ENCODE measurements at regions of chrX and their contacts with region 1.

Region 1: DNA sequence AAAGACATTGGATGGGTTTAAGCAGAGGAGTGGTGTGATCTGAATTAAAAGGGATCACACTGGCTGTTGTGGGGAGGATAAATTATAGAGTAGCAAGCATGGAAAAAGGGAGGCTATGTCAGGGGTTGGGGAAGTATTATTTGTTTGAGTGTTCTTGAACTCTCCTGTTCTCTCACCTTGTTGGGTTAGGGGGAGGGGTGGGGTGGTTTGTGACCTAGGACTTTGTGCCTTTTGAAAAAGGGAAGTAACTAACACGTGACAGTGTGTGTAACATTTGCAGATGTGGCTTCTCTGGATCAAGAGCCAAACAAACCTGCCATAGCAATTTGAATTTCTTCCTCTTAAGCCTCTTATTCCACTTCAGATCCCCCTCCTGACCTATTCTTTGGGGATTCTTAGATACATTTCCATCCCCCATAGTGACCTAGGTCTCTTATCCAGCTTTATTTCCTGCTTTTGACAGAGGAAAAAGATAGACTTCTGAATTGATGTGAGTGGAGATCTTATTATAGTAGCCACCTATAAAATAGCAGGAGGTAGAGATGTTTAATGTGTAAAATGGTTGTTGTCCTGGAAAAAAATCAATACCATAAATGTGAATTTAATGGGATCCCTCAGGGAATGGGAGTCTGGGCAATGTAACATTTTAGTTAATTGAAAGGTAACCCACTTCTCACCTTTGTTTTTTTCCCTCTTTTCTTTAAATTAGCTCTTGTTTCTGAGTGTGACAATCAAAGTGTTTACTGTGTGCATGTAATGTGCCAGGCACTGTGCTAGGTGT is 120.4 kb downstream of the CT47B1 start:
- DNase-seq: peak; percentile 84
- H3K4me3 ChIP-seq: peak overlapping the region; percentile 71
- H3K27ac ChIP-seq: peak overlapping the region; percentile 96
- H3K4me1 ChIP-seq: peaks cover 86% of the 10 kb centered on the region
- CTCF ChIP-seq: no peak

Region 2: GRCh38 chrX:120250522-120251271 is 504.6 kb before region 1 on chrX and contains the start of gene ZBTB33:
- CTCF ChIA-PET with region 1: no interaction called
- POLR2A ChIA-PET with region 1: no interaction called
- intact Hi-C with region 1: loop called (anchors 10 kb)
- DNase-seq: peak; percentile 90
- H3K4me3 ChIP-seq: peak within 1 kb of the TSS; percentile 92
- H3K27ac ChIP-seq: peak within 1 kb of the TSS; percentile 90
- H3K4me1 ChIP-seq: peaks cover 14% of the 10 kb centered on the region
- CTCF ChIP-seq: peak; percentile 70
- total RNA-seq, gene ZBTB33: 16.7 TPM in 2 replicates

Region 3: GRCh38 chrX:120560842-120561633 is 194.2 kb before region 1 on chrX and contains the start of gene CUL4B:
- CTCF ChIA-PET with region 1: no interaction called
- POLR2A ChIA-PET with region 1: interaction called, 5 read pairs
- intact Hi-C with region 1: loop called (anchors 2 kb)
- DNase-seq: peak; percentile 90
- H3K4me3 ChIP-seq: peak within 1 kb of the TSS; percentile 90
- H3K27ac ChIP-seq: peak within 1 kb of the TSS; percentile 85
- H3K4me1 ChIP-seq: peaks cover 22% of the 10 kb centered on the region
- CTCF ChIP-seq: no peak
- total RNA-seq, gene CUL4B: 13.5 and 15.5 TPM in 2 replicates

Region 4: GRCh38 chrX:120629667-120630537 is 125.4 kb before region 1 on chrX and contains the start of gene C1GALT1C1:
- CTCF ChIA-PET with region 1: no interaction called
- POLR2A ChIA-PET with region 1: interaction called, 4 read pairs
- intact Hi-C with region 1: loop called (anchors 2 kb)
- DNase-seq: peak; percentile 94
- H3K4me3 ChIP-seq: peak within 1 kb of the TSS; percentile 74
- H3K27ac ChIP-seq: peak within 1 kb of the TSS; percentile 81
- H3K4me1 ChIP-seq: peaks cover 41% of the 10 kb centered on the region
- CTCF ChIP-seq: peak; percentile 51
- total RNA-seq, gene C1GALT1C1: 16.5 and 16.8 TPM in 2 replicates

Region 5: GRCh38 chrX:120736989-120737388 is 18.3 kb before region 1 on chrX:
- CTCF ChIA-PET with region 1: interaction called, 3 read pairs
- POLR2A ChIA-PET with region 1: interaction called, 11 read pairs
- intact Hi-C with region 1: no loop called
- DNase-seq: no peak
- H3K4me3 ChIP-seq: no peak overlapping the region
- H3K27ac ChIP-seq: no peak overlapping the region
- H3K4me1 ChIP-seq: peaks cover 4% of the 10 kb centered on the region
- CTCF ChIP-seq: no peak

Region 6: GRCh38 chrX:120769576-120770341 is 14.5 kb after region 1 on chrX:
- CTCF ChIA-PET with region 1: no interaction called
- POLR2A ChIA-PET with region 1: interaction called, 11 read pairs
- intact Hi-C with region 1: no loop called
- DNase-seq: peak; percentile 68
- H3K4me3 ChIP-seq: no peak overlapping the region
- H3K27ac ChIP-seq: no peak overlapping the region
- H3K4me1 ChIP-seq: peaks cover 12% of the 10 kb centered on the region
- CTCF ChIP-seq: peak; percentile 79

Measured in OCI-LY7 (cell line).